WTC11 (cell line): ENCODE measurements at regions of chr7 and their contacts with region 1.

Region 1: DNA sequence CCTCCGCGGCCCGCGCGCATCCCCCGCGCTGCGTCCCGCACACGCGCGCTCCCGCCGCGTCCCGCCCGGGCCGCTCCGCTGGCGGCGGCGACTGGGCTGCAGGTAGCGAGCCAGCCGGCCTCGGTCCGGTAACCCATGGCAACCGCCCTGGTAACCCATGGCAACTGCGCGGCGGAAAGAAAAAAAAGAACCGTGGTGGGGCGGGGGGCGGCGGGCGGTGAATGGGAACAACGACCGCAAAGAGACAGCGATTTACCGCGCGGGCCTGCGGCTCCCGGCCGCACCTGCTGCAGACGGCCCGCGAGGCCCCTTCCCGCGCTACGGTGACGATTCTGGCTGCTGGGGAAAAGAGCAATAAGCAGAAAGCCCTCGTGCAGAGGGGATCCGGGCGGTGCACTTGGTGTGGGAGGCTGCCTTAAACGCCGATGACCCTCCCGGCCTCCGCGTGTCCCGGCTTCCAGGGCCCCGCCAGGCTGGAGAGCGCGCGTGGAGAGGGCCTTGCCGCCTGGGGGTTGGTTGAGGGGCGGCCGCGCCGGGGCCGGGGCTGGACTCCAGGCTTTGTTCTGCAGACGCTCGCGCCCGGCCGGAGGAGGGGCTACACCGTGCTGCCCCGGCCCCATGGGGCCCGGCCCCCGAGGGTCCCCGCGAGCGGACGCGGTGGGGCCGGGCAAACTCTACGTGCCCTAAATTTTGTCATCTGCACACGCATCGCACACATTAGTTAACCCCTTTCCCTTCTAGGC is 84.7 kb downstream of the SNX10 start:
- DNase-seq: peak; percentile 86
- ATAC-seq: peak; percentile 63
- H3K4me3 Mint-ChIP-seq: peak overlapping the region; percentile 81
- H3K27ac Mint-ChIP-seq: no peak overlapping the region
- H3K4me1 Mint-ChIP-seq: peaks cover 22% of the 10 kb centered on the region
- H3K27me3 Mint-ChIP-seq: no peaks in the 10 kb centered on the region; the same call in 1 of the 2 replicates
- CTCF ChIP-seq: no peak

Region 2: GRCh38 chr7:26398756-26399501 is 22.6 kb after region 1 on chr7:
- CTCF ChIA-PET with region 1: interaction called, 19 read pairs
- POLR2A ChIA-PET with region 1: no interaction called
- DNase-seq: peak; percentile 56
- ATAC-seq: peak; percentile 50
- H3K4me3 Mint-ChIP-seq: peak overlapping the region; percentile 93
- H3K27ac Mint-ChIP-seq: peak overlapping the region; percentile 65
- H3K4me1 Mint-ChIP-seq: peaks cover 25% of the 10 kb centered on the region
- H3K27me3 Mint-ChIP-seq: peaks cover 10% of the 10 kb centered on the region
- CTCF ChIP-seq: no peak

Region 3: GRCh38 chr7:26667500-26668133 is 291.3 kb after region 1 on chr7:
- CTCF ChIA-PET with region 1: interaction called, 23 read pairs
- POLR2A ChIA-PET with region 1: no interaction called
- DNase-seq: peak; percentile 68
- ATAC-seq: peak; percentile 97
- H3K4me3 Mint-ChIP-seq: no peak overlapping the region
- H3K27ac Mint-ChIP-seq: no peak overlapping the region
- H3K4me1 Mint-ChIP-seq: peaks cover 14% of the 10 kb centered on the region
- H3K27me3 Mint-ChIP-seq: no peaks in the 10 kb centered on the region
- CTCF ChIP-seq: peak; percentile 43